Pancreas (tissue), 10 donors: ENCODE measurements at regions of chr14 and their contacts with region 1.

Region 1: GRCh38 chr14:51996148-51996746 is 6.9 kb downstream of the RTRAF start:
- DNase-seq: no peak
- ATAC-seq: peak in 2 of 4 donors; percentile 57 to 63
- H3K4me3 ChIP-seq: no peak overlapping the region
- H3K27ac ChIP-seq: no peak overlapping the region
- H3K4me1 ChIP-seq: peaks cover 0 to 8% (median 0%) of the 10 kb centered on the region in 3 donors
- H3K27me3 ChIP-seq: no peaks in the 10 kb centered on the region
- CTCF ChIP-seq: peak in 3 of 4 donors; percentile 43 to 59 (median 56)

Region 2: GRCh38 chr14:51094901-51095853 is 901.1 kb before region 1 on chr14 and contains the start of gene TRIM9:
- intact Hi-C with region 1: no loop called
- DNase-seq: peak; percentile 91 to 98 (median 95)
- ATAC-seq: peak; percentile 96 to 97 (median 97)
- H3K4me3 ChIP-seq: peak within 1 kb of the TSS; percentile 52 to 91 (median 68)
- H3K27ac ChIP-seq: peak within 1 kb of the TSS in 2 of 4 donors; percentile 36 to 55
- H3K4me1 ChIP-seq: peaks cover 0 to 11% (median 7%) of the 10 kb centered on the region in 3 donors
- H3K27me3 ChIP-seq: peaks cover 0 to 22% (median 0%) of the 10 kb centered on the region in 4 donors
- CTCF ChIP-seq: no peak
- total RNA-seq, gene TRIM9: 0.25 to 0.95 (median 0.63) TPM

Region 3: DNA sequence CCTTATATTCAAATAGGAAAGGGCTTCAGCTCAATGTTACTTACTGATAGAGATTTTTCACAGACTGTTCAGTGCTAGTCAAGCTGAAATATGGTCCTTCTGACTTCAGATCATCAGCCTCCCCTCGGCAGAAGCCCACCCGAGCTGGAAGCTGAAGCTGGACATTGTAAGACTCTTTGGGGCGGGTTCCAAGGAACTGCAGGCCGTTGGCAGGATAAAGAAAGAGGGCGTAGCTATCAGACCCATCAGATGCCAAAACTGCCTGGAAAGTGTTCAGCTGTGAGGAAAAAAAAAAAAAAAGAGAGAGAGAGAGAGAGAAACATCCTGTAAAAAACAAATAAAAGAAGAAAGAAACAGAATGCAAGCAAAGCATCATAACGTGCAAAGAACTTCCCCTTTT is 63.8 kb after region 1 on chr14:
- intact Hi-C with region 1: no loop called
- DNase-seq: peak in 1 of 6 donors; percentile 23
- ATAC-seq: peak; percentile 31 to 66 (median 50)
- H3K4me3 ChIP-seq: no peak overlapping the region
- H3K27ac ChIP-seq: no peak overlapping the region
- H3K4me1 ChIP-seq: peaks cover 0 to 17% (median 5%) of the 10 kb centered on the region in 3 donors
- H3K27me3 ChIP-seq: no peaks in the 10 kb centered on the region
- CTCF ChIP-seq: no peak

Region 4: GRCh38 chr14:52131640-52132320 is 135.5 kb after region 1 on chr14:
- intact Hi-C with region 1: loop called in 1 of 3 experiments (anchors 5 kb)
- DNase-seq: peak in 5 of 6 donors; percentile 65 to 86 (median 77)
- ATAC-seq: peak; percentile 96 to 99 (median 98)
- H3K4me3 ChIP-seq: no peak overlapping the region
- H3K27ac ChIP-seq: no peak overlapping the region
- H3K4me1 ChIP-seq: peaks cover 0 to 7% (median 0%) of the 10 kb centered on the region in 3 donors
- H3K27me3 ChIP-seq: no peaks in the 10 kb centered on the region
- CTCF ChIP-seq: peak; percentile 21 to 54 (median 43)